ENCODE measurements at regions of chr5 and their contacts with region 1.

Region 1: GRCh38 chr5:147188200-147189108 is 46.4 kb upstream of the STK32A start:
- DNase-seq: peak in 7 of 10 donors; percentile 19 to 61 (median 33)

Region 2: DNA sequence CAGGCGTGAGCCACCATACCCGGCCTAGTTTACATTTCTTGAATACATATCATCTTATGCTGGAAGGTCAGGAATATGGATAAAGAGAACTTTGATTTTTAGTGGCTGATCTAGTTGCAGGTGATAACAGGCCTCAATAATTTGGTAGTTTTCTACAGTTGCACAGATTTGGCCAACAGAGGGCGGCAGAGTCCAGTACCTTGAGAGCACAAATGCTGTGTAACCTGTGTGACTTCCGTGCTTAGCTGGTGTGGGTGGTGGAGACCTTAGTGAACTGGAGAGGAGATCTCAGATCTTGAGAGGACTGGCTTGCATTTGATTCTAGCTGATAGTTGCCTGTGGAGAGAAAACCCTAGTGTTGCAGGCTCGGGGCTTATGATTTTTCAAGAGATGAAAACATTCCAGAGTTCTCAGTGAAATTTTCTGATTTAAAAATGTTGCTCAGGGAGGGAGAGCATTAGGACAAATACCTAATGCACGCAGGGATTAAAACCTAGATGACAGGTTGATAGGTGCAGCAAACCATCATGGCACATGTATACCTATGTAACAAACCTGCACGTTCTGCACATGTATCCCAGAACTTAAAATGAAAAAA is 655.1 kb before region 1 on chr5:
- intact Hi-C with region 1: loop called (anchors 2 kb)
- DNase-seq: peak in 9 of 10 donors; percentile 44 to 95 (median 73)

Region 3: DNA sequence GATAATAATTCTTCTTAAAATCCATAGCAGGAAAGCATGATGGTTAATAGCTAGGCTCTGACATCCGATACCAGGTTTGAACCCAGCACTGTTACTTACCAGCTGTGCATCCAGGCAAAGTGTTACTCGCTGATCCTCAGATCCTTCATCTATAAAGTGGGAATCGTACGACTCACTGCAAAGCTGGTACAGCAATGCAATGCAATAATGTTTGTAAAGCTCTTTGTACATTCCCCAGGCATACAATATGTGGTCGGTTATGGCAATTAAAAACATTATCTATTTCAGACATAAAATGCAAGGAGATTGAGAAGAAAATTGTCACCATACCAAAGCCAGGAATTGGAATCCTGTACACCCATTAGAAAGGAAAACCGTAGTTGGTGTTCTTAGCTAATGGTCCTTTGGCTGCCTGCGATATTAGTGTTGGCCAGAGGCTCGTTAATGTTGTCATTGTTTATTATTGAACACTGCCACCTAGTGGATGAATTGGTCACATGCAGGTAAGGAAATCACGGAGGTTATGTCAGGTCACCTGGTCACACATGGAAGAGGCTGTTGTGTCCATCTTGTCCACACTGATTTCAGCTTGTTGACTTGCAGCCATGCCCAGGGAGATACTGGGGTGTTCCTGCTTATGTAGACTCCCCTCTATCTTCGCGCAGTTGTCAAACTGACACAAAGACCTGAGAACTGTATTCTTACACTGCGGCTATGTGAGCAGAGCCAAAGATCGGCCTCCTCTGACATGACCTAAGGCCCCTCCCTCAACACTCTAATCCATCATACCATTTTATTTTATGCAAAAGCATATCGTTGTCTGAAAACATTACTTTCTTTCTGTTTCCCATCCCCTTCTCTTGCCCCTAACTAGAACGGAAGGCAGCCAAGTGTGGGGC is 222.4 kb before region 1 on chr5:
- intact Hi-C with region 1: loop called (anchors 2 kb)
- DNase-seq: peak in 3 of 10 donors; percentile 25 to 46 (median 30)

Region 4: GRCh38 chr5:147093160-147093559 is 95.3 kb before region 1 on chr5:
- intact Hi-C with region 1: loop called (anchors 5 kb)
- DNase-seq: no peak

Region 5: DNA sequence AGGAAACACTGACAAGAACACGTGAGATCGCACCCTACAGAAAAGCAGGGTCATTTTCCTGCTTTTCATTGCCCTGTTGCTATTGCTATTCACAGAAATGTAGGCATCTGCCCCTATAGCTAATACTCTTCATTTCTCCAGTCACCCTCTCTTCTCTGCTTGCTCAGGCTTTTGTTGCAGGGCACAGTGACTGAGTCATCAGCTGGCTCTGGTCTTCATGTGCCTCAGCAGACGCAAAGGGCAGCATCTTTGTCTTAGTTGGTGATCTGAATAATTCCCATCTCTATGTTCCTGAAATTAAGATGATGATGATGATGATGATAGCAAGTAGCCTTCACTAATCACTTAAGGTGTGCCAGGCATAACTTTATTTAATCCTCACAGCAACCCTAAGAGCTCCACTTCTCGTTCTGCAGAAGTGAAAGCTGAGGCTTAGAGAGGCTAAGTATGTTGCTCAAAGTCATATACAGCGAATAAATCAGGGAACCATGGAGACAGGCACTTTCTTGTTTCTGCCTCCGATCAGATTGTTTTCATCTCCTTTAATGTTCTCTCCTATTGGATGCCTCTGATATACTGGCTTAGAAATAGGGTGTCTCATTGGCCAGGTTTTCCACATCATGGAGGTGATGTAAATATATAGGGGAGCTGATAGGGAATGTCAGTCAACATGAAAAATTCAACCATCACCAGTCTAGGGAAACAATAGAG is 86.6 kb before region 1 on chr5:
- intact Hi-C with region 1: loop called (anchors 5 kb)
- DNase-seq: peak in 6 of 10 donors; percentile 11 to 84 (median 28)

Region 6: GRCh38 chr5:147148715-147149114 is 39.7 kb before region 1 on chr5:
- intact Hi-C with region 1: no loop called
- DNase-seq: no peak

Measured in posterior cingulate gyrus (tissue), 11 donors.